Right ventricle myocardium inferior (tissue), 1 donor: ENCODE measurements at regions of chr10 and their contacts with region 1.

Region 1: GRCh38 chr10:1465418-1465976 is 271.8 kb downstream of the ADARB2 start:
- DNase-seq: no peak
- ATAC-seq: no peak

Region 2: DNA sequence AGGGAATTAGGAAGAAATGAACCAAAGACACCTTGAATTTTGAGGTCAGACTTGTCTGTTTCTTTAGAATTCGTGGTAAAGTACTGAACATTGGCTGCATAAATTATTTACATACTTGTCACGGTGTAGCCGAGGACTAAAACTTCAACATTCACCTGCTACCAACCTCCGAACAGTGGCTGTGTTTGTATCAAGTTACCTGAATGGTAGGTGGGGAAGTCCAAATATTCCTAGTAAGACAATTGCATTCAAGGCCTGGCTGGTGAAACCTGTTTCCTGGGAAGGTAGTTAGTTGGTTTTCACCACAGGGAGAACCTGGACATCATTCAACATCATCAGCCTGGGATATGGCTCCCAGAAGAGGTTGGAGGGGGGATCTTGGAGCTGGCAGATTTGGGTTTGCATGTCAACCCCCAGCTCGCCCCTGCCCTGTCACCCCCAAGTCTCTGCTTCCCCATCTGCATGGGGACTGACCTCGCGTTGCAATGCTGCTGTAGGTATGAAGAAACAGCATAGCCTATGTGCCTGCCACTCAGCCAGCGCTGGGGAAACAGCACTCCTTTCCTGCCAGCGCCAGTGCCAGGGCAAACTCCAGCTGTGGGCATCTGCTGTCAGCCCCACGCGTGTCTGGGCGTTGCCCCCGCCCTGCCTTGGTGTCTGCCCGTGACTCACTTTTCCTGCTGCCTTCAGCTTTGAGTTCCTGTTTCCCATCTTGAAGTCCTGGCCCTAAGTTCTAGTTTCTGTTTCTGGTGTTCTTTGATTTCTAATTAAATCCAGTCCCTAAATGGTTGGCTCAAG is 521.3 kb before region 1 on chr10:
- intact Hi-C with region 1: no loop called
- DNase-seq: peak; percentile 90
- ATAC-seq: peak; percentile 67

Region 3: GRCh38 chr10:1498746-1499358 is 33.4 kb after region 1 on chr10:
- intact Hi-C with region 1: no loop called
- DNase-seq: no peak
- ATAC-seq: no peak

Region 4: DNA sequence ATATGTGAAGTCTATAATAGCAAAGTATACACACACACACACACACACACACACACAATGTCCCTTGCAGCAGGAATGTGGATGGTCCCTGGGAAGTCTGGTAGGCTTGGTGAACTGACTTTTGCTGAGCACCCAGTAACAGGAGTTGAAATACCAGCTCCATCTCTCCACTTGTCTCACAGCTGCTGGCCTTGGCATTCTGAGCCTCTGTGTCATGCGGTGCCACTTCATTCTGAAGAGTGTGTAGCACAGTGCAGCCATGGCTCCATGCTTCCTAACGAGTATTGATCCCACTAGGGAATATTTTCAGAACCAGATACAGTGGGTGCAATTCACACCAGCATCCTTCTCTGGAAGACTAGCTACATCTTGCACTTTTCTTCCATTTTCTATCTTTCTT is 79.4 kb after region 1 on chr10:
- intact Hi-C with region 1: loop called (anchors 5 kb)
- DNase-seq: no peak
- ATAC-seq: peak; percentile 74